Activated B cell treated with CpG ODN at 0.5 μM for 24 hours (primary cell): ENCODE measurements at regions of chr6 and their contacts with region 1.

Region 1: DNA sequence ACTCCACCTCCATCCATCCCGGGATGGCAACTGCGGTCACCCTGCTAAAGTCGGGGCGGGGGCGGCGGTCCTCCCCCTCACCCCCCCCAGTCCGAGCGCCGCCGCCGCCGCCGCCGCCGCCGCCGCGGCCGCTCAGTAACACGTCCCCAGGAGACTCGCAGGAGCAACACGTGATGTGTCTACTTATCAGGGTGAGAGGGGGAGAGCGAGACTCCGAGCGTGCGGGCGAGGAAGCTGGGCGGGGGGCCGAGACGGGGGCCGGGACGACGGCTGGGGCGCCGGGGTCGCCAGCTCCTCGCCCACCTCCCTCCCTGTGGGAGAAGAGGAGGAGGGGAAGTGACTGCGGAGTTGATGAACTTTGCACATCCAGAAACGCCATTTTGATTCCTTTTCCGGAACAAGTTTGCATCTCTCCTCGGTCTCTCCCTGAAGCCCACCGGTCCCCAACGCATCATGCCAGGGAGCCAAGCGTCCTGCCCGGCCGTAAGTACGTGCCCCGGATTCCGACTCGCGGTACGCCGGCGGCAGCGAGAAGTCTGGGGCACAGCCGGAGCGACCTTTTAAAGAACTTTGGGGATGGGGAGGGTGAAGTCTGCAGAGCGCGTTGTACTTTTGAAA is at the start of gene RREB1:
- DNase-seq: peak; percentile 61
- ATAC-seq: peak; percentile 64
- H3K4me3 Mint-ChIP-seq: peak within 1 kb of the TSS; percentile 95
- H3K27ac Mint-ChIP-seq: peak within 1 kb of the TSS; percentile 94
- H3K4me1 Mint-ChIP-seq: peaks cover 38% of the 10 kb centered on the region
- H3K27me3 Mint-ChIP-seq: no peaks in the 10 kb centered on the region
- CTCF ChIP-seq: no peak
- total RNA-seq, gene RREB1: 62.2 and 67.7 TPM in 2 replicates

Region 2: GRCh38 chr6:6803572-6803971 is 304.1 kb before region 1 on chr6:
- CTCF ChIA-PET with region 1: no interaction called
- POLR2A ChIA-PET with region 1: no interaction called
- intact Hi-C with region 1: loop called (anchors 1 kb)
- DNase-seq: peak; percentile 56
- ATAC-seq: peak; percentile 85
- H3K4me3 Mint-ChIP-seq: peak overlapping the region; percentile 4
- H3K27ac Mint-ChIP-seq: peak overlapping the region; percentile 42
- H3K4me1 Mint-ChIP-seq: peaks cover 79% of the 10 kb centered on the region
- H3K27me3 Mint-ChIP-seq: no peaks in the 10 kb centered on the region
- CTCF ChIP-seq: no peak

Region 3: GRCh38 chr6:7073821-7074525 is 33.7 kb before region 1 on chr6:
- CTCF ChIA-PET with region 1: no interaction called
- POLR2A ChIA-PET with region 1: interaction called, 24 read pairs
- intact Hi-C with region 1: loop called (anchors 1 kb)
- DNase-seq: peak; percentile 58
- ATAC-seq: peak; percentile 98
- H3K4me3 Mint-ChIP-seq: peak overlapping the region; percentile 57
- H3K27ac Mint-ChIP-seq: peak overlapping the region; percentile 87
- H3K4me1 Mint-ChIP-seq: peaks cover 28% of the 10 kb centered on the region
- H3K27me3 Mint-ChIP-seq: no peaks in the 10 kb centered on the region
- CTCF ChIP-seq: no peak

Region 4: DNA sequence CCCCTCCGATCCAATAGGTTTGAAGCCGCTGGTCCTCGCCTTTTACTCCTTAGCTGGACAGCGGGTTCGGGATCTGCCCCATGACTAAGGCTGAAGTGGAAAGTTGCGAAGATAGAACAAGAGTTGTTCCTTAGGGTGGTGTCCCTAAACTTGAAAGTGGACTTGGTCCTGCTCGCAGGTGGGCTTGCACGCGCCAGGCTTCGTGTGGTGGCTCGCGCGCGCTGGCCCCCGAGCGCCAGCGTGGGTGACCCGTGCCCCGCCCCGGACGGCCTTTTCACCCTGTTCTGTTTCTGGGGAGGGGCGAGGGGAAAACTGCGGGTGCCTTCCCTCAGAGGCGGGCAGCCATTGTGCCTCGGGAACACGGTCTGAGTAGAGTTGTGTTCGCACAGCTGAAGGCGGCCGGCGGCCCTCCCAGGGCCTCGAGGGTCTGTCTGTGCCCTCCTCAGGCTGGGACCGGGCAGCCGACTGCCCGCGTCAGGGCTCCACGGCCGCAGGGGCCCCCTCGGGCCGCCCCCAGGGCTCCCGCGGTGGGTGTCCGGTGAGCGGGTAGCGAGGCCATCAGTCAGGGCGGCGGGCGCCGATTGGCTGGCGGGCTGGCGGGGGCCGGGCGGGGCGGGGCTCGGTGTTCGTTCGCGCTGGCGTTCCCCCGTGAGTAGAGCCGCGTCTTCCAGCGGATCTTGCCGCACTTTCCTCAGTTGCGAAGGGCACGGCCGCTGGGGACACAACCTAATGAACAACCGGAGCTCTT is 33.1 kb after region 1 on chr6:
- CTCF ChIA-PET with region 1: no interaction called
- POLR2A ChIA-PET with region 1: interaction called, 10 read pairs
- intact Hi-C with region 1: loop called (anchors 1 kb)
- DNase-seq: peak; percentile 78
- ATAC-seq: peak; percentile 82
- H3K4me3 Mint-ChIP-seq: peak overlapping the region; percentile 85
- H3K27ac Mint-ChIP-seq: peak overlapping the region; percentile 89
- H3K4me1 Mint-ChIP-seq: peaks cover 77% of the 10 kb centered on the region
- H3K27me3 Mint-ChIP-seq: no peaks in the 10 kb centered on the region
- CTCF ChIP-seq: no peak

Region 5: GRCh38 chr6:7188492-7188891 is 80.8 kb after region 1 on chr6:
- CTCF ChIA-PET with region 1: no interaction called
- POLR2A ChIA-PET with region 1: interaction called, 4 read pairs
- intact Hi-C with region 1: loop called (anchors 2 kb)
- DNase-seq: no peak
- ATAC-seq: peak; percentile 97
- H3K4me3 Mint-ChIP-seq: peak overlapping the region; percentile 45
- H3K27ac Mint-ChIP-seq: peak overlapping the region; percentile 72
- H3K4me1 Mint-ChIP-seq: peaks cover 21% of the 10 kb centered on the region
- H3K27me3 Mint-ChIP-seq: no peaks in the 10 kb centered on the region
- CTCF ChIP-seq: no peak

Region 6: GRCh38 chr6:7270320-7271204 is 162.9 kb after region 1 on chr6:
- CTCF ChIA-PET with region 1: no interaction called
- POLR2A ChIA-PET with region 1: no interaction called
- intact Hi-C with region 1: no loop called
- DNase-seq: no peak
- ATAC-seq: no peak
- H3K4me3 Mint-ChIP-seq: no peak overlapping the region
- H3K27ac Mint-ChIP-seq: no peak overlapping the region
- H3K4me1 Mint-ChIP-seq: peaks cover under 1% of the 10 kb centered on the region
- H3K27me3 Mint-ChIP-seq: peaks cover 4% of the 10 kb centered on the region
- CTCF ChIP-seq: no peak